ENCODE measurements at regions of chr2 and their contacts with region 1.

Region 1: GRCh38 chr2:8681786-8682692 is at the start of gene ID2:
- DNase-seq: peak; percentile 99 to 100
- H3K4me3 ChIP-seq: peak within 1 kb of the TSS; percentile 80
- CTCF ChIP-seq: peak in 1 of 3 donors; percentile 12
- POLR2A ChIP-seq: peak in 1 of 2 donors; percentile 97
- total RNA-seq, gene ID2: 120 to 271 (median 209) TPM

Region 2: DNA sequence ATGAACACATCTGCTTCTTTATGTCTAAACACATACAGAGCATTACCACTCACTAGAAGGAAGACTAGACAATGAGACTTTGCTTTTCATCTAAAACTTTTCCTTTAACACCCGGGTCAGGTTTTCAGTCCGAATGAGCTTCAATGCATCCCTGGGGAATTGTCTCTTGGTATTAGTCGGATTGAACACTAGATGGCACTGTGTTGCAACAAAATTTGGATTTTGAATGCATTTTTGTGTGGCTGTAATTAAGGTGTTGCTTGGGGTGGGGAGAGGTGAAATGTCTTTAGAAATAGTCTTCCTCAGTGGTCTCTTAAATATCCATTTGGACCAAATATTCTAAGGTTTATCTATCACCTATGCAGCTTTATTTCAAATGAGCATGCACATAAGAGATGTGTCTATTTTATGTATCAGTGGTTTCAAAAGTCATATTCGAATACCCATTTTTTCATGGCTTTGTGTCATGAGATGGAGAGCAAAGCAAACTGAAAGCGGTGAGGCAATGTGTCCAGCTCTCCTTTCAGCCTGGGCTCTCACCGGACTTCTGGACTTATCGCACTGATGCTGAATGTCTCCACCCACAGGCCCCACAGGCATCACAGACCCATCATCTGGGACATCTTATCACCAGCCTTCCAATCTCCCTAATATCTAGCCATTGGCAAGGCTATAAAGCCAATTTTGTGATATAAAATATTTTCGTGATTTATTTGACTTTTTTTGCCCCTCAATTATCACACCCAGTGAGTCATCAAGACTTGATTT is 1254.6 kb before region 1 on chr2:
- intact Hi-C with region 1: loop called (anchors 5 kb)
- DNase-seq: no peak
- H3K4me3 ChIP-seq: no peak overlapping the region
- CTCF ChIP-seq: peak in 1 of 3 donors; percentile 30
- POLR2A ChIP-seq: no peak

Region 3: GRCh38 chr2:8544786-8545694 is 137.0 kb before region 1 on chr2:
- intact Hi-C with region 1: loop called (anchors 10 kb)
- DNase-seq: peak; percentile 67 to 94
- H3K4me3 ChIP-seq: no peak overlapping the region
- CTCF ChIP-seq: no peak
- POLR2A ChIP-seq: no peak

Region 4: DNA sequence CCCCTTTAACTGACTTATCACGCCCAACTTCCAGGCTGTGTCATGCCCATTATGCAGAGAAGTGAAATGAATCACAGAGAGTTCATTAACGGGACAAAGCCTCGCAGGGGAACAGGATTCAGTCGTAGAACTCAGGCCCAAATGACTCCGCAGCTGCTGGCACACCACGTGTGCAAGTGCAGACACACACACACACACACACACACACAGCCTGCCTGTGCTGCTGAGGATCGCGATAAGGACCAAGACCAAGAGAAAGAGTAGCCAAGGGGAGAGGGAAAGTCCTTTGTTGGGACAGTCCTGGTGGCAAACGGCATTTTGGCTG is 1071.2 kb after region 1 on chr2:
- intact Hi-C with region 1: loop called (anchors 5 kb)
- DNase-seq: peak in 1 of 2 donors; percentile 66
- H3K4me3 ChIP-seq: no peak overlapping the region
- CTCF ChIP-seq: no peak
- POLR2A ChIP-seq: no peak

Measured in lower leg skin (tissue), 4 donors.